Endothelial cell of umbilical vein (primary cell): ENCODE measurements at regions of chr7 and their contacts with region 1.

Region 1: GRCh38 chr7:1526251-1526763 is 4.2 kb upstream of the MAFK start:
- DNase-seq: no peak
- H3K4me3 ChIP-seq: no peak overlapping the region
- H3K27ac ChIP-seq: no peak overlapping the region
- H3K4me1 ChIP-seq: no peaks in the 10 kb centered on the region
- H3K27me3 ChIP-seq: peaks cover 7 to 11% of the 10 kb centered on the region in 2 experiments
- CTCF ChIP-seq: no peak
- POLR2A ChIP-seq: no peak

Region 2: GRCh38 chr7:1555809-1556540 is 29.7 kb after region 1 on chr7 and contains the start of gene TMEM184A:
- CTCF ChIA-PET with region 1: interaction called, 3 read pairs
- POLR2A ChIA-PET with region 1: no interaction called
- dilution Hi-C with region 1: no loop called
- intact Hi-C with region 1: loop called (anchors 1 kb)
- DNase-seq: no peak
- H3K4me3 ChIP-seq: no peak within 1 kb of the TSS
- H3K27ac ChIP-seq: no peak within 1 kb of the TSS
- H3K4me1 ChIP-seq: no peaks in the 10 kb centered on the region
- H3K27me3 ChIP-seq: no peaks in the 10 kb centered on the region
- CTCF ChIP-seq: peak; percentile 16 to 38
- POLR2A ChIP-seq: no peak
- total RNA-seq, gene TMEM184A: not detected in 2 replicates